AG04450 (cell line): ENCODE measurements at regions of chr11 and their contacts with region 1.

Region 1: GRCh38 chr11:45371251-45372115 is 85.3 kb upstream of the SYT13 start:
- DNase-seq: peak; percentile 7
- H3K4me3 ChIP-seq: no peak overlapping the region
- H3K27ac ChIP-seq: no peak overlapping the region
- H3K27me3 ChIP-seq: peaks cover 12% of the 10 kb centered on the region
- CTCF ChIP-seq: peak; percentile 88

Region 2: DNA sequence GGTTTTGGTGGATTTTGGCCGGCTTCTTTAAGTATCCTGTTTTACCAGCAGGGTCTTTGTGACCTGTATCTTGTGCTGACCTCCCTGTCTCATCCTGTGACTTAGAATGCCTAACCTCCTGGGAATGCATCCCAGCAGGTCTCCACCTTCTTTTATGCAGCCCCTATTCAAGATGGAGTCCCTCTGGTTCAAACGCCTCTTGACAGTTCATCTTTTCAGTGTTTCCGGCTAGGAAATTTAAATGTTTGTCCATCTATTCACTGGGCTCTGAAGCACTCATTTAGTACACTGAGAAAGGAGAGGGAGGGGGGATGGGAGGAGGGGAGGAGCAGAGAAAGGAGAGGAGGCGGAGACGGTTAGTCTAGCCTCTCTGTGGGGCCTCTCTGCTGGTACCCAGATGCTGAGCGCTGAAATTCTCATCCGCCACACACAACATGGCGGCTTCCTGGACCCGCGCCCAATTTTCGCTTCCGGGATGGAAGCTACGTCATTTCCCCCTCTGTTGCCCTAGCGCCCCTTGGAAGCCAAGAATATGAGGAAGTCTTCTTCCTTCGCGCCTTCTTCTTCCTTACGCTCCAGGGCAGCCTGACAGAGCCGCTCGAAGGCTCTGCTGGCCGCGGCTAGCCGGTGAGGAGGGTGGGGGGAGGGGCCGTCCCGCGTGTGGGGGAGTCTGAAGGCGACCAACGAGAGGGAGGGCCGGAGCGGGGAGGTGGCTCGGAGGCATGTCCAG is 16.3 kb before region 1 on chr11:
- CTCF ChIA-PET with region 1: interaction called, 11 read pairs
- POLR2A ChIA-PET with region 1: no interaction called
- DNase-seq: no peak
- H3K4me3 ChIP-seq: peak overlapping the region; percentile 55
- H3K27ac ChIP-seq: no peak overlapping the region
- H3K27me3 ChIP-seq: peaks cover 6% of the 10 kb centered on the region
- CTCF ChIP-seq: no peak

Region 3: GRCh38 chr11:45392591-45393091 is 21.2 kb after region 1 on chr11:
- CTCF ChIA-PET with region 1: interaction called, 11 read pairs
- POLR2A ChIA-PET with region 1: no interaction called
- DNase-seq: no peak
- H3K4me3 ChIP-seq: no peak overlapping the region
- H3K27ac ChIP-seq: no peak overlapping the region
- H3K27me3 ChIP-seq: peaks cover 14% of the 10 kb centered on the region
- CTCF ChIP-seq: no peak

Region 4: DNA sequence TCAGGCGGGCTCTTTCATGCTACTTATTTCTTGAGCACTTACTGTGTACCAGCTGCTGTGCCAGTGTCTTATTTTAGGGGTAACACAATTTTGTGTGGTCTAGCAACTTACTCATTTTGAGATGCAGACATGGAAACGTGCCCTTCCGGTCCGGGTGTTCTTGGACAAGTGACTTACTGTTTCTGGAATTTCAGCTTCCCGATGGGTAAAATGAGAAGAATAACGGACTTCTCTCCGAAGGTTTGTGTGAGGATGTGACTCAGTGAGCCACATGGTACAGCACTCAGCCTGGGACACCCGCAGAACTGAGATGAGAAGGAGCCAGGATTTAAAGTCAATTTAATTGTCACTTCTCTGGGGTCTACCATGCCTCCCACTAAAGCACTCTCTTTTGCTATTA is 29.1 kb after region 1 on chr11:
- CTCF ChIA-PET with region 1: interaction called, 11 read pairs
- POLR2A ChIA-PET with region 1: no interaction called
- DNase-seq: peak; percentile 24
- H3K4me3 ChIP-seq: no peak overlapping the region
- H3K27ac ChIP-seq: peak overlapping the region; percentile 21
- H3K27me3 ChIP-seq: no peaks in the 10 kb centered on the region
- CTCF ChIP-seq: no peak